Activated CD4-positive, alpha-beta T cell treated with anti-CD3 and anti-CD28 coated beads, Interleukin-2, amount 10 ng/mL, durations not matched to agents 7 days and 5 days (primary cell): ENCODE measurements at regions of chr3 and their contacts with region 1.

Region 1: GRCh38 chr3:126679318-126679751 is 24.4 kb upstream of the TXNRD3 start:
- DNase-seq: peak; percentile 73
- H3K4me3 Mint-ChIP-seq: no peak overlapping the region
- H3K27ac Mint-ChIP-seq: no peak overlapping the region
- H3K4me1 Mint-ChIP-seq: peaks cover 5% of the 10 kb centered on the region
- H3K27me3 Mint-ChIP-seq: peaks cover 7% of the 10 kb centered on the region

Region 2: GRCh38 chr3:126476166-126476980 is 203.0 kb before region 1 on chr3:
- CTCF ChIA-PET with region 1: no interaction called
- POLR2A ChIA-PET with region 1: no interaction called
- DNase-seq: no peak
- H3K4me3 Mint-ChIP-seq: peak overlapping the region; percentile 68
- H3K27ac Mint-ChIP-seq: peak overlapping the region; percentile 86
- H3K4me1 Mint-ChIP-seq: peaks cover 37% of the 10 kb centered on the region
- H3K27me3 Mint-ChIP-seq: no peaks in the 10 kb centered on the region

Region 3: DNA sequence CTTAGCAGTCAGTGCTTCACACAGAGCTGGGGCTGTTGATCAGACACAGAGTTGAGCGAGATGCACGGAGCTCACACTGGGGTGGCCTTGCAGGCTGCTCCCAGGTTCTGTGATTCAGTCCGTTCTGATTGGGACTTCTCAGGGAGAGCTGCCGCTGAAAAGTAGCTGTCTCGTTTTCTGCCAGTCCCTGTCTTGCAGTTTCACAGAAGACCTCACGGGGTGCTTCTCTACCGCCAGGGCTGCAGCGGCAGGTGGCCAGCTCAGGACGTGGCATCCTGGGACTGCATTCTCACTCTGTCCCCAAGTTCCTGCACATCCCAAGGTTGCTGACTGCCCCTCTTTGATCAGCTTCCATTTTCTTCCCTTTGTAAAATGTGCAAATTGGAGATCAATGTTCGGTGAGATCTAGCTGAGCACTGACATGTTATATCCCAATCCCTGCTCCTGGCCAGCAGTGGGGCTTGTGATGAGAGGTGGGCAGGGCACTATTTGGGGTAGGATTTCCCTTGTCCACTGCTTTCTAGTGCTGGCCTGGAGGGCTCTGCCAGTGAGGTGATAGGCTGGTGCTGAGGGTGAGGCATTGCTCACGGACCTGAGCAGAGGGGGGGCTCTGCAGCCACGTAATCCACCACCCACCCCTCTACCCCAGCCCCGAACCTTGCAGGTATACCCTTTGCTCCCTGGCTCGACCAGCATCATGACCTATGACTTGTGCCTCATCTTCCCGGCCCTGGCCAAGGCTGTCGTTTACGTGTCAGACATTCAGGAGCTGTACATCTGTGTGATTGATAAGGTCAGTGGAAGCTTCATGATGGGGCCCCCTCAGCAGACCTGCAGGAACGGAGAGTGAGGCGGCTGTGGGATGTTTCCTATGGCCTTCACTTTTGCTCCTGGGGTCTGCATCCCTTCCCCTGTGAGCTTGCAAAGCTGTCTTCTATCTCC is 19.1 kb before region 1 on chr3:
- CTCF ChIA-PET with region 1: interaction called, 11 read pairs
- POLR2A ChIA-PET with region 1: no interaction called
- DNase-seq: no peak
- H3K4me3 Mint-ChIP-seq: no peak overlapping the region
- H3K27ac Mint-ChIP-seq: no peak overlapping the region
- H3K4me1 Mint-ChIP-seq: peaks cover under 1% of the 10 kb centered on the region
- H3K27me3 Mint-ChIP-seq: peaks cover 2% of the 10 kb centered on the region